ENCODE measurements at regions of chr15 and their contacts with region 1.

Region 1: GRCh38 chr15:47717036-47717611 is at the start of gene SEMA6D:
- DNase-seq: peak; percentile 87
- H3K4me3 ChIP-seq: peak within 1 kb of the TSS; percentile 64 to 90 (median 85)
- H3K27ac ChIP-seq: peak within 1 kb of the TSS; percentile 58
- H3K4me1 ChIP-seq: peaks cover 19% of the 10 kb centered on the region
- H3K27me3 ChIP-seq: no peaks in the 10 kb centered on the region
- CTCF ChIP-seq: peak; percentile 36 to 47
- POLR2A ChIP-seq: peak; percentile 19
- total RNA-seq, gene SEMA6D: 22.5 and 26.7 TPM in 2 replicates

Region 2: DNA sequence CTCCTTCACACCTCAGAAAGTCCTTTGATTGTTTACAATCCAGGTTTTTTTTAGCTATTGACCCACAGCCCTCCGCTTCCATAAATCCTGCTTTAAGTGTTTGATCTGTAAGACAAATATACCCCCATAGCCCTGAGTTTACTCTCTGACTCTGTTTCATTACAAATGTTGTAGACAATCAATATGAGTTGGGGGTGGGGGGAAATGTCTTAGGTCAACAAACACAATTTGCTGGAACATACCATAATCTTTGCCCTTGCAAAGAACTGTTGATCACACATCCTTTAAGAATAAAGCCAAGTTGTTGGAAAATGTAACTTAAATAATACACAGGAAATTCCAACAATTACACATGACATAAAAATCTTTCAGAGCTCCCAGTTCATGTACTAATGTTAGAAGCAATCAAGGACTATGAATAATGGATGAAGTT is 301.6 kb before region 1 on chr15:
- CTCF ChIA-PET with region 1: interaction called, 3 read pairs
- POLR2A ChIA-PET with region 1: no interaction called
- dilution Hi-C with region 1: no loop called
- intact Hi-C with region 1: loop called (anchors 2 kb)
- DNase-seq: peak; percentile 91
- H3K4me3 ChIP-seq: no peak overlapping the region
- H3K27ac ChIP-seq: peak overlapping the region; percentile 97
- H3K4me1 ChIP-seq: peaks cover 40% of the 10 kb centered on the region
- H3K27me3 ChIP-seq: no peaks in the 10 kb centered on the region
- CTCF ChIP-seq: no peak
- POLR2A ChIP-seq: no peak

Region 3: GRCh38 chr15:47516558-47516957 is 200.6 kb before region 1 on chr15:
- CTCF ChIA-PET with region 1: interaction called, 15 read pairs
- POLR2A ChIA-PET with region 1: no interaction called
- dilution Hi-C with region 1: no loop called
- intact Hi-C with region 1: loop called (anchors 1 kb)
- DNase-seq: no peak
- H3K4me3 ChIP-seq: no peak overlapping the region
- H3K27ac ChIP-seq: peak overlapping the region; percentile 66
- H3K4me1 ChIP-seq: peaks cover 52% of the 10 kb centered on the region
- H3K27me3 ChIP-seq: peaks cover 0 to 3% of the 10 kb centered on the region in 2 experiments
- CTCF ChIP-seq: no peak
- POLR2A ChIP-seq: no peak

Region 4: GRCh38 chr15:47620965-47621685 is 96.0 kb before region 1 on chr15:
- CTCF ChIA-PET with region 1: no interaction called
- POLR2A ChIA-PET with region 1: no interaction called
- dilution Hi-C with region 1: no loop called
- intact Hi-C with region 1: no loop called
- DNase-seq: no peak
- H3K4me3 ChIP-seq: no peak overlapping the region
- H3K27ac ChIP-seq: no peak overlapping the region
- H3K4me1 ChIP-seq: no peaks in the 10 kb centered on the region
- H3K27me3 ChIP-seq: no peaks in the 10 kb centered on the region
- CTCF ChIP-seq: no peak
- POLR2A ChIP-seq: no peak

Region 5: GRCh38 chr15:47750030-47750739 is 33.1 kb after region 1 on chr15:
- CTCF ChIA-PET with region 1: interaction called, 6 read pairs
- POLR2A ChIA-PET with region 1: no interaction called
- dilution Hi-C with region 1: no loop called
- intact Hi-C with region 1: loop called (anchors 1 kb)
- DNase-seq: peak; percentile 84
- H3K4me3 ChIP-seq: no peak overlapping the region
- H3K27ac ChIP-seq: peak overlapping the region; percentile 58
- H3K4me1 ChIP-seq: peaks cover 17% of the 10 kb centered on the region
- H3K27me3 ChIP-seq: no peaks in the 10 kb centered on the region
- CTCF ChIP-seq: no peak
- POLR2A ChIP-seq: no peak

Region 6: GRCh38 chr15:47817969-47818548 is 100.9 kb after region 1 on chr15:
- CTCF ChIA-PET with region 1: interaction called, 4 read pairs
- POLR2A ChIA-PET with region 1: no interaction called
- dilution Hi-C with region 1: no loop called
- intact Hi-C with region 1: loop called (anchors 5 kb)
- DNase-seq: no peak
- H3K4me3 ChIP-seq: no peak overlapping the region
- H3K27ac ChIP-seq: no peak overlapping the region
- H3K4me1 ChIP-seq: no peaks in the 10 kb centered on the region
- H3K27me3 ChIP-seq: peaks cover 5 to 8% of the 10 kb centered on the region in 2 experiments
- CTCF ChIP-seq: no peak
- POLR2A ChIP-seq: no peak

Region 7: DNA sequence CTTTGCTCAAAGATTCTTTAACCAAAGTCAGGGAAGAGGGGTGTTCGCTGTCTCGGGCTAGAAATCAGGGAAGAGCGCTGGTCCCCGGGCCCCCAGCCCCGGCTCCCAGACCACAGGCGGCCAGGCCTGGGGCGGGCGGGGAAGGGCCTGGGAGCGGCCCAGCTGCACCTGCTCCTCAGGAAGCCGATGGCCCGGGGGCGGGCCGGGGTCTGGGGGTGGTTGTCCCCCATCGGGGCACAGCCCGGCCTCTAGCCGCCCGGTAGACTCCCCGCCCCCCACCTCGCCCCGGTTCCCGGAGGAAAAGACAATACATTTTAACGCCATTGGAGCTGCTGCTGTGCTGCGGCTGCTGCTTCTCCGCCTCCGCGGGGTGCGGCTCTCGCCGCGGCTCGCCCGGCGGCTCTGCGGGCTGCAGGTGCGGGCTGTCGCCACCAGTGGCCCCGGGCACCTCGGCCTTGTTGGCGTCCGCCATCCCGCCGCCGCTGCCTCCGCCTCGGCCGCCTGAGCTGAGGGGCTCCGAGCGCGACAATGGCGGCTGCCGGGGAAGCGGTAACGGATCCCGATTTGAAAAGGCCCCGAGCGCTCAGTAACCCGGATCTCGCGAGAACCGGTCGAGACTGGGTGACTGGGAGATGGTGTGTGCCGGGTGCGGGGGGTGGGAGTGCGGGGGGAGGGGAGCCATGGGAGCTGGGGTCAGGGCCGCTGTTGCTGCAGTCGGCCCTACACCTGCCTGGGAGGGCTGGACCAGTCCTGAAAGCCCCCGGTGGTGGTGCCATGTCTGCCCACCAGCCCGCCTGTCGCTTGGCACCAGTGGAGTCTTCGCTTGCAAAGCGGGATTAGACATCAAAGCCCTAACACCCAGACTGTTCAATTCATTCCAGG is 460.9 kb after region 1 on chr15 and contains the start of gene MYEF2:
- CTCF ChIA-PET with region 1: no interaction called
- POLR2A ChIA-PET with region 1: no interaction called
- dilution Hi-C with region 1: no loop called
- intact Hi-C with region 1: loop called (anchors 10 kb)
- DNase-seq: peak; percentile 78
- H3K4me3 ChIP-seq: peak within 1 kb of the TSS; percentile 14 to 68 (median 60)
- H3K27ac ChIP-seq: peak within 1 kb of the TSS; percentile 84
- H3K4me1 ChIP-seq: peaks cover 12% of the 10 kb centered on the region
- H3K27me3 ChIP-seq: peaks cover 0 to 2% of the 10 kb centered on the region in 2 experiments
- CTCF ChIP-seq: no peak
- POLR2A ChIP-seq: peak; percentile 60
- total RNA-seq, gene MYEF2: 54.8 and 62.5 TPM in 2 replicates

Region 8: GRCh38 chr15:48285329-48286214 is 568.4 kb after region 1 on chr15:
- CTCF ChIA-PET with region 1: interaction called, 3 read pairs
- POLR2A ChIA-PET with region 1: no interaction called
- dilution Hi-C with region 1: no loop called
- intact Hi-C with region 1: loop called (anchors 10 kb)
- DNase-seq: peak; percentile 90
- H3K4me3 ChIP-seq: peak overlapping the region in 1 of 3 experiments; percentile 55
- H3K27ac ChIP-seq: no peak overlapping the region
- H3K4me1 ChIP-seq: peaks cover 3% of the 10 kb centered on the region
- H3K27me3 ChIP-seq: peaks cover 4 to 8% of the 10 kb centered on the region in 2 experiments
- CTCF ChIP-seq: peak; percentile 41 to 70
- POLR2A ChIP-seq: no peak